HepG2 (cell line): ENCODE measurements at regions of chr2 and their contacts with region 1.

Region 1: GRCh38 chr2:200963124-200963917 is at the start of gene ORC2:
- DNase-seq: peak; percentile 96
- ATAC-seq: peak; percentile 96
- H3K4me3 ChIP-seq: peak within 1 kb of the TSS; percentile 79 to 96 (median 86)
- H3K27ac ChIP-seq: peak within 1 kb of the TSS; percentile 85
- H3K4me1 ChIP-seq: peaks cover 52% of the 10 kb centered on the region
- H3K27me3 ChIP-seq: no peaks in the 10 kb centered on the region; a peak in 1 of 5 replicates
- CTCF ChIP-seq: peak; percentile 92
- EP300 ChIP-seq: peak in 1 of 2 experiments; percentile 30; a peak in 2 of 4 replicates
- POLR2A ChIP-seq: peak; percentile 74 to 85
- RAD21 ChIP-seq: peak; percentile 77
- total RNA-seq, gene ORC2: 58.3 and 73.5 TPM in 2 replicates

Region 2: DNA sequence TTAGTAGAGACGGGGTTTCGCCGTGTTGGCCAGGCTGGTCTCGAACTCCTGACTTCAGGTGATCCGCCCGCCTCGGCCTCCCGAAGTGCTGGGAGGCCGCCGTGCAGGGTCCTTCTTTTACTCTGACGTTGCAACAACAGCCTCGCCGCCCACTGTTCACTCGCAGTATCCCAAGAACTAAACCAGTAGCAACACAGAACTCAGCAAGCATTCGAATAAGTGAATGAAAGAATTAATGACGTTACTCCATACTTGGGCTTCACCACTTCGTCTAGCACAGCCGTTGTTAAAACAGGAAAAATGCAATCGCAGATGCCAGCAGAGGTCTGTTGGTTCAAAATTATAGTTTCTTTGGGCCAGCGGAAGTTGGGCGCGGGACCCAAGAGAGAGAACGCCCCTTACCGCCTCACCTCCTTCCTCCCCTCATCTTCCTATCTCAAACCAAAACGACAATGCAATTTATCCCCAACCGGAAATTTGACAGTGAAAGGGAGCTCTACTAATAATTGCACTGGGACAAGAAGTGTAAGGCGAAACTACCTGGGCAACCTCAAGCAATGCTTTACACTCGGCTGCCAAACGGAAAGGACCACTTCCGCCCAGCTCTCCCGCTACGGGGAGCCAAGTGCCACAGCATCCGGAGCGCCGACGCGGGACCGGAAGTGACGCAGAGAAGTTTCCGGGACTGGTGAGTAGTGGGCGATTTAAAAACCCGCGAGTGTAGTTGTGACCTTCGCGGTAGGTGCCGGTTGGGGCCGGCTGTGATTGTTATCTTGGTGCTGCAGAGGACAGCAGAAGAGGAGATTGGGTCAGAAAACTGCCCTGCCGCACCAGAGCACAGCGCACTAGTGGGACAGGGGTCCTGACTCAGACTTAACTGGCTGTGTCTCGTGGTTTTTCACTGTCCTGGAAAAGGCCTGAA is 74.4 kb before region 1 on chr2 and contains the starts of genes NIF3L1 and PPIL3:
- CTCF ChIA-PET with region 1: no interaction called
- POLR2A ChIA-PET with region 1: interaction called, 18 read pairs
- in situ Hi-C with region 1: no loop called
- intact Hi-C with region 1: no loop called
- DNase-seq: peak; percentile 99
- ATAC-seq: peak; percentile 90
- H3K4me3 ChIP-seq: peak within 1 kb of the TSS; percentile 79 to 92 (median 90)
- H3K27ac ChIP-seq: peak within 1 kb of the TSS; percentile 97
- H3K4me1 ChIP-seq: peaks cover 34% of the 10 kb centered on the region
- H3K27me3 ChIP-seq: no peaks in the 10 kb centered on the region; a peak in 2 of 5 replicates
- CTCF ChIP-seq: no peak; the same call in none of the 2 replicates
- EP300 ChIP-seq: peak; percentile 30 to 68; a peak in 2 of 4 replicates
- POLR2A ChIP-seq: peak; percentile 69 to 95
- RAD21 ChIP-seq: 0 out of 2 replicates have a peak, but pooled peaks have one; percentile 17
- total RNA-seq, gene NIF3L1: 67.9 and 98.5 TPM in 2 replicates
- total RNA-seq, gene PPIL3: 98.7 and 126 TPM in 2 replicates

Region 3: DNA sequence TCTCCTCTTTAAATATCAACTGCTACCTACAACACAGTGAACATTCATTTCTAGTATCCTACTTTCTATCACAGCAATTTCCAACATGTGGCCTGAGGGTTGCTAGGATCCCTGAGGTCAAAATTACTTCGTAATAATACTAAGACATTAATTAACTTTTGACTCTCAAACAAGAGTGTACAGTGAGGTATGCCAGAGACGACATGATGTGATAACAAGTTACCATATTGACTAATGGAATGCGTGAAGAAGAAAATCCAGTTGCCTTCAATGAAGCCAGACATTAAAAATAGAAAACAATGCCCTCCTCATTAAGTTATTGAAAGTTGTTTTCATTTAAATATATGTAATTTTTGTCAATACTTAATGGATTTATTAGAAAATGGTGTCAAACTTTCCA is 12.9 kb before region 1 on chr2:
- CTCF ChIA-PET with region 1: no interaction called
- POLR2A ChIA-PET with region 1: interaction called, 41 read pairs
- in situ Hi-C with region 1: no loop called
- intact Hi-C with region 1: no loop called
- DNase-seq: no peak
- ATAC-seq: no peak
- H3K4me3 ChIP-seq: no peak overlapping the region
- H3K27ac ChIP-seq: no peak overlapping the region
- H3K4me1 ChIP-seq: peaks cover 6% of the 10 kb centered on the region
- H3K27me3 ChIP-seq: no peaks in the 10 kb centered on the region
- CTCF ChIP-seq: no peak
- EP300 ChIP-seq: no peak
- POLR2A ChIP-seq: no peak
- RAD21 ChIP-seq: no peak

Region 4: DNA sequence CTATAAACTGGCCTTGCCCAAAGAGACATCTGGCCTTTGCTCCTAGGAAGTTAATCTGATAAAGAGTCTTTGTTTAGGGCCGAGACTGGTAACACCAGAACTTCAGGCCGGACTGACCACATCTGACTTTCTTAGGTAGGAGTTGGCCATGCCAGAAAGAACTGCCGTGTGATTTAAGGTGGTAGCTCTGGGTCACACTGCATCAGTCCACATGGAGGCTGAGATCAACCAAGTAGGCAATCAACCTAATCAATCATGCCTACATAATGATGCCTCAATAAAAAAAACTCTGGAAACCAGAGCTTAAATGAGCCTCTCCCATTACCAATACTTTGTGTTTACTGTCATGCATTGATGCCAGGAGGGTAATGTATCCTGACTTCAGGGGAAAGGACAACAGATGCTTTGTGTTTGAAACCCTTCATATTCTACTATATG is 44.3 kb after region 1 on chr2:
- CTCF ChIA-PET with region 1: no interaction called
- POLR2A ChIA-PET with region 1: interaction called, 28 read pairs
- in situ Hi-C with region 1: no loop called
- intact Hi-C with region 1: loop called (anchors 1 kb)
- DNase-seq: peak; percentile 52
- ATAC-seq: peak; percentile 59
- H3K4me3 ChIP-seq: peak overlapping the region in 1 of 3 experiments; percentile 34; a peak in 2 of 6 replicates
- H3K27ac ChIP-seq: peak overlapping the region; percentile 64
- H3K4me1 ChIP-seq: peaks cover 28% of the 10 kb centered on the region
- H3K27me3 ChIP-seq: no peaks in the 10 kb centered on the region
- CTCF ChIP-seq: no peak
- EP300 ChIP-seq: 0 out of 4 replicates have a peak, but pooled peaks of 1 of the 2 experiments have one; percentile 30
- POLR2A ChIP-seq: no peak
- RAD21 ChIP-seq: no peak

Region 5: GRCh38 chr2:201064797-201065329 is 101.5 kb after region 1 on chr2:
- CTCF ChIA-PET with region 1: interaction called, 4 read pairs
- POLR2A ChIA-PET with region 1: interaction called, 42 read pairs
- in situ Hi-C with region 1: loop called (anchors 5 kb)
- intact Hi-C with region 1: loop called (anchors 1 kb)
- DNase-seq: no peak
- ATAC-seq: no peak
- H3K4me3 ChIP-seq: no peak overlapping the region
- H3K27ac ChIP-seq: no peak overlapping the region
- H3K4me1 ChIP-seq: peaks cover 33% of the 10 kb centered on the region
- H3K27me3 ChIP-seq: no peaks in the 10 kb centered on the region
- CTCF ChIP-seq: no peak
- EP300 ChIP-seq: no peak
- POLR2A ChIP-seq: no peak
- RAD21 ChIP-seq: no peak

Region 6: DNA sequence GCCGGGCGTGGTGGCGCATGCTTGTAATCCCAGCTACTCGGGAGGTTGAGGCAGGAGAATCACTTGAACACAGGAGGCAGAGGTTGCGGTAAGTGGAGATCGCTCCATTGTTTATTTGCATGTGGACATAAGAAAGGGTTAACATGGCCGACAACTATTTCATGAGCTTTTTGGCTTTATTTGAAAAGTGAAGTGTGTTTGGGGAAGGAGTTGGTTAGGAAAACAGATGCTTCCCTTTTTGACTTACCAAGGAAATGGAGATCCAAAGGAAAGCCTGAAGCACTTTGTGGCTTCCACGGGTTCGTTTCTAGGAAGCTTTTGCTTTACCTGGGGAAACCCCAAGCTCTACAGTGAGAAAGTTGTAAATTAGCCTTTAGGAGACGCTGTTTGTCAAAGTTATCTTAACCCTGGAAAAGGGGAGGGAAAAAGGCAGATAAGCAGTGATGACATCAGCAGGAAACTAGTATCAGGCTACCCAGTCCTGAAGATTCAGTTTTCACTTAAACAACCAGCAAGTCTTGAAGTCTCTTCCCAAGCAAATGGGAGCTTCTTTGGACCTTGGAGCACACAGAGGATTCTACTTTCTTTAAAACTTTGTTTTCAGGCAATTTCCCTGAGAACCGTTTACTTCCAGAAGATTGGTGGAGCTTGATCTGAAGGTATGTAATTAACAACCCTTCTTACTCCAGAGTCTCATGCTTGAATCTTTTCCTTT is 219.5 kb after region 1 on chr2 and contains the start of gene CASP10:
- CTCF ChIA-PET with region 1: no interaction called
- POLR2A ChIA-PET with region 1: interaction called, 11 read pairs
- in situ Hi-C with region 1: no loop called
- intact Hi-C with region 1: no loop called
- DNase-seq: peak; percentile 94
- ATAC-seq: peak; percentile 84
- H3K4me3 ChIP-seq: peak within 1 kb of the TSS; percentile 68 to 95 (median 74)
- H3K27ac ChIP-seq: peak within 1 kb of the TSS; percentile 74
- H3K4me1 ChIP-seq: peaks cover 68% of the 10 kb centered on the region
- H3K27me3 ChIP-seq: no peaks in the 10 kb centered on the region; a peak in 1 of 5 replicates
- CTCF ChIP-seq: peak; percentile 96
- EP300 ChIP-seq: 0 out of 4 replicates have a peak, but pooled peaks of 1 of the 2 experiments have one; percentile 52
- POLR2A ChIP-seq: peak; percentile 70 to 88
- RAD21 ChIP-seq: peak; percentile 83
- total RNA-seq, gene CASP10: 22.2 and 31.1 TPM in 2 replicates